ENCODE measurements at regions of chr21 and their contacts with region 1.

Region 1: DNA sequence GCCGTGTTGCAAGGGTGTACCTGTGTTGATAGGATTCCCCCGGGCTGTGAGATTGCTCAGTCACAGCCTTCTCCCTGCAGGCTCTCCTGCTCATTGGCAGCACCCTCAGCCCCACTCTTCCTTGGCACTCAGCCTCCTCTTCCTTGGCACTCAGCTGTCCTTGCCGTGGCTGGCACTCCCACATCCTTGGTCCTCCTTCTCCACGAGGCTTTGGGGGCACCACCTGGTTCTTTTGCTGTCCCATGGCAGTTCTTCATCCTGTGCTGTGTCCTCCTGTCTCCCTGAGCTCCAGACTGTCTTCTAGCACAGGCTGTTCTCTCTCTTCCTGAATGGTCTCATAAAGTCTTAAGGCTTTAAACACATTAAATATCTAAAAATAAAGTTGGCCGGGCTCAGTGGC is 26.9 kb downstream of the PKNOX1 start:
- DNase-seq: no peak
- H3K4me3 ChIP-seq: no peak overlapping the region
- H3K27ac ChIP-seq: peak overlapping the region in 1 of 5 donors; percentile 71
- H3K4me1 ChIP-seq: peaks cover 0 to 19% (median 7%) of the 10 kb centered on the region in 4 donors
- H3K27me3 ChIP-seq: no peaks in the 10 kb centered on the region
- CTCF ChIP-seq: no peak
- EP300 ChIP-seq: no peak
- POLR2A ChIP-seq: no peak

Region 2: DNA sequence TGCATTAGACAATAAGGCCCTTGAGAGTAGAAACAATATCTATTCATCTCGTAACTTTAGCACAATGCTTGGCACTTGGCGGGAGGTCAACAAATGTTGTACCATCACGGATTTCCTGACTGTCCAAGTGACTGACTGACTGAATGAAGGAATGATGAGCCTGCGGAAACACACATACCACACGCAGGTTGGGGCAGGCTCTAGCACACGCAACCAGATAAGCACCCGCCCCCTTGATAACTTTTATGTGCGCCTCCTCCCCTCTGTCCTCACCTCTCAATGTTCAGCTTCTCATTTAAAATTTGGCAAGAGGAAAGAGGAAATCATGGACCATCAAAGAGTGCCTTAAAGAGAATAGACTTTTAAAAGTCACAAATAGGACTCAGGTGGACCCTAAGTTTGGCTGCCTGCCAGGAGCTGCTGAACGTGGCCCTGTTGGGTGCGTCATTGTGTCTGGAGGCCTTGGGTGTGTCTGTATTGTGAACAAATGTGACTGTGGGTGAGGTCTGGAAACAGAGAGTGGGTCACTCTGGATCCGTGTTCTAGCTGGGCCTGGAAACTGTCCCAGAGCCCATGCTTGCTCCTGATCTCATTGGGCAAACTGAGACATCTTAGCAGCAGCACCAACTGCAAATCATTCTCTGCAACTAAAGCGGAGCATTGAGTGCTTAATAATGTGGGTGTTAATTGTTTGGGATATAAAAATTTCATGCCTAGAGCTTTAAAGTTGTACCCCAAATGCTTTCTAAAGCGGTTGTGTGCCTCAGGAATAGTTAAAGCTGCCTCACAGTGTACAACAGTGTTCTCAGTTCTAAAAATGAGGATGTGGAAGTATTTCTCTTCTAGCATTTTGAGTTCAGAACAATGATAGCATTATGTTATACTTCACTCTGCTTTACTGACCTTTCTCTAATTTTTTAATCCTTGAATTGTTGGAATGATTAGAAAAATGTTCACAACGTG is 829.9 kb before region 1 on chr21:
- intact Hi-C with region 1: no loop called
- DNase-seq: peak; percentile 71 to 91
- H3K4me3 ChIP-seq: no peak overlapping the region
- H3K27ac ChIP-seq: peak overlapping the region; percentile 38 to 78 (median 58)
- H3K4me1 ChIP-seq: peaks cover 0 to 8% (median 0%) of the 10 kb centered on the region in 4 donors
- H3K27me3 ChIP-seq: no peaks in the 10 kb centered on the region
- CTCF ChIP-seq: no peak
- EP300 ChIP-seq: no peak
- POLR2A ChIP-seq: no peak

Region 3: GRCh38 chr21:43676391-43676790 is 675.1 kb after region 1 on chr21:
- intact Hi-C with region 1: loop called (anchors 10 kb)
- DNase-seq: no peak
- H3K4me3 ChIP-seq: no peak overlapping the region
- H3K27ac ChIP-seq: no peak overlapping the region
- H3K4me1 ChIP-seq: no peaks in the 10 kb centered on the region
- H3K27me3 ChIP-seq: no peaks in the 10 kb centered on the region
- CTCF ChIP-seq: no peak
- EP300 ChIP-seq: no peak
- POLR2A ChIP-seq: no peak

Measured in stomach (tissue), 19 donors.